Sigmoid colon (tissue), 7 donors: ENCODE measurements at regions of chr1 and their contacts with region 1.

Region 1: DNA sequence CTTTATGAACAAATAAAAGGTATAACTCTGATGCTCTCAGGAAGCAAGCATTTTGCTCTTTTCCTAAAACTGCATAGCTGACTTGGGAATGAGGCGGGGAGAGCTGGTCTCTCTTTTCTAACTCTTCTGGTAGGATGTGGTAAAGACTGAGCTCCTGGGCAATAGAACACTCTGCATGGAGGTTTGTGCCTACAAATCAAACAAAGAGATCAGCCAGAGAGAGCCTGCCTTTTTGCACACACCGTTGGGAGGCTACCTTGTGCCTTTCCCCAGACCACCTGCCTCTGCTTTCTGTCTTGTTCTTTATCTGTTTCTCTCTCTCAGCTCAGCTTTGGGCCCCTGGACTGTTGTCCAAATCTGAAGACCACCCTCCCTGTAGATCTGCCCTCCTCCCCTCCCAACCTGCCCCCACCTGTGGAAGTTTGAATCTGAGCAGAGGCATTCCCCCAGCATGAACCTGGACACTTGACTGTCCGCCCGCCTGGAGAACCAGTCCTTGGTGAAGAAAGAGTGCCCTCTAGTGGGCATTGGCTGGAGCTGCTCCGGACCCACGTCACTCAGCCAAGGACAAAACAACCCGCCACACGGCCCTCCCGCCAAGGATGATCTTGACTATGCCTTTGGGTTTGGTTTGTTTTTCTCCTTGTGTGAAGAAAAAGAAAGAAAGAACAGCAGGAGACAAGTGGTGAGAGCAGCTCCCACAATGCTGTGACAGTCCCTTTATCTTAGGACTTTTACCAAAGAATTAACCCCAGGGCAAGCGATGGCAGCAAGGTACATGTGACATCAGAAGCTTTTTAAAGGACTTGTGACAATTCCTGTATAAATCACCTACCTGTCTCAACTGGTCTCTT is 228.2 kb downstream of the PBX1 start:
- DNase-seq: peak; percentile 95
- H3K4me3 ChIP-seq: no peak overlapping the region
- H3K27ac ChIP-seq: peak overlapping the region; percentile 72 to 87 (median 77)
- H3K4me1 ChIP-seq: peaks cover 0 to 92% (median 86%) of the 10 kb centered on the region in 4 donors
- H3K27me3 ChIP-seq: no peaks in the 10 kb centered on the region
- CTCF ChIP-seq: peak; percentile 85 to 93 (median 88)
- EP300 ChIP-seq: no peak
- POLR2A ChIP-seq: no peak

Region 2: DNA sequence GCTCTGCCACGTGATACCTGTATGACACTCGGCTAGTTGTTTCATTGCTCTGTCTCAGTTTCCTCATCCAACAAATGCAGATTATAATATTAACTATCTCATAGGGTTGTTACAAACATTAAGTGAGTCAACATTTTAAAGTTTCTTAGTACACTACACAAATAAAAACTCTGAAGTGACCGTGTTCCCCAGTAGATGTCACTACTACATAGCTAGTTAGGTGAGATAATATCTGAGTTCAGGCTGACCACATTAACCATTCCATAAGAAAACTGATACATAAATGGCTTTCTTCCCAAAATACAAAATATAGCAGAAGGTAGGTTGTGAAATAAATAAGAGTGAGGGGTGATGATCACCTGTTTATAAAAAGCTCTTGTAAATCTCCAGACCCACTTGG is 1251.4 kb before region 1 on chr1:
- intact Hi-C with region 1: loop called (anchors 2 kb)
- DNase-seq: no peak
- H3K4me3 ChIP-seq: no peak overlapping the region
- H3K27ac ChIP-seq: no peak overlapping the region
- H3K4me1 ChIP-seq: peaks cover 0 to 22% (median 20%) of the 10 kb centered on the region in 4 donors
- H3K27me3 ChIP-seq: no peaks in the 10 kb centered on the region
- CTCF ChIP-seq: peak in 3 of 4 experiments; percentile 6 to 29 (median 10)
- EP300 ChIP-seq: no peak
- POLR2A ChIP-seq: no peak

Region 3: DNA sequence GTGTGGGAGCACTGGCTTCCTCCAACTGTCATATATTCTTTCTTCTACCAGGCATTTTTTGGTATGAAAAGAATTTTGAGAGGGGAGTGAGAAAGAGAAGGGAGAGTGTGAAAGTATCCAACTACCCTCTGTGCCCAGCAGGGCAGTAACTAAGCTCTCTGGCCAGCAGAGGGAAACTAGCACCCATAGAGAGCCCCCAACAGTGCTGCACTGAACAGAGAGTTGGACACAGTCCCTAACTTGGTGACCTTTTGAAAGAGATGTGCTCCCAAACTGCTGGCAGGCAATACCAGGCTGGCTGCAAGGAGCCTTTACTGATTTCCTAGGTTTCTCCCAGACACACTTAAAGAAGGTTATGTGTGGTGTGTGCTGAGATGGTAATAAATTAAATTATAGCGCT is 347.0 kb before region 1 on chr1:
- intact Hi-C with region 1: loop called (anchors 5 kb)
- DNase-seq: peak; percentile 62
- H3K4me3 ChIP-seq: no peak overlapping the region
- H3K27ac ChIP-seq: no peak overlapping the region
- H3K4me1 ChIP-seq: peaks cover 0 to 12% (median 10%) of the 10 kb centered on the region in 4 donors
- H3K27me3 ChIP-seq: no peaks in the 10 kb centered on the region
- CTCF ChIP-seq: peak; percentile 32 to 38 (median 37)
- EP300 ChIP-seq: no peak
- POLR2A ChIP-seq: no peak

Region 4: GRCh38 chr1:164576291-164577271 is 210.6 kb before region 1 on chr1:
- intact Hi-C with region 1: loop called (anchors 5 kb)
- DNase-seq: peak; percentile 74
- H3K4me3 ChIP-seq: peak overlapping the region; percentile 21 to 46 (median 40)
- H3K27ac ChIP-seq: peak overlapping the region; percentile 77 to 91 (median 88)
- H3K4me1 ChIP-seq: peaks cover 0 to 81% (median 80%) of the 10 kb centered on the region in 4 donors
- H3K27me3 ChIP-seq: no peaks in the 10 kb centered on the region
- CTCF ChIP-seq: no peak
- EP300 ChIP-seq: no peak
- POLR2A ChIP-seq: no peak

Region 5: GRCh38 chr1:164637461-164638375 is 149.5 kb before region 1 on chr1:
- intact Hi-C with region 1: loop called (anchors 5 kb)
- DNase-seq: peak; percentile 87
- H3K4me3 ChIP-seq: no peak overlapping the region
- H3K27ac ChIP-seq: peak overlapping the region; percentile 76 to 86 (median 80)
- H3K4me1 ChIP-seq: peaks cover 0 to 92% (median 86%) of the 10 kb centered on the region in 4 donors
- H3K27me3 ChIP-seq: no peaks in the 10 kb centered on the region
- CTCF ChIP-seq: no peak
- EP300 ChIP-seq: peak in 1 of 4 donors; percentile 18
- POLR2A ChIP-seq: no peak